PC-9 (cell line): ENCODE measurements at regions of chr17 and their contacts with region 1.

Region 1: DNA sequence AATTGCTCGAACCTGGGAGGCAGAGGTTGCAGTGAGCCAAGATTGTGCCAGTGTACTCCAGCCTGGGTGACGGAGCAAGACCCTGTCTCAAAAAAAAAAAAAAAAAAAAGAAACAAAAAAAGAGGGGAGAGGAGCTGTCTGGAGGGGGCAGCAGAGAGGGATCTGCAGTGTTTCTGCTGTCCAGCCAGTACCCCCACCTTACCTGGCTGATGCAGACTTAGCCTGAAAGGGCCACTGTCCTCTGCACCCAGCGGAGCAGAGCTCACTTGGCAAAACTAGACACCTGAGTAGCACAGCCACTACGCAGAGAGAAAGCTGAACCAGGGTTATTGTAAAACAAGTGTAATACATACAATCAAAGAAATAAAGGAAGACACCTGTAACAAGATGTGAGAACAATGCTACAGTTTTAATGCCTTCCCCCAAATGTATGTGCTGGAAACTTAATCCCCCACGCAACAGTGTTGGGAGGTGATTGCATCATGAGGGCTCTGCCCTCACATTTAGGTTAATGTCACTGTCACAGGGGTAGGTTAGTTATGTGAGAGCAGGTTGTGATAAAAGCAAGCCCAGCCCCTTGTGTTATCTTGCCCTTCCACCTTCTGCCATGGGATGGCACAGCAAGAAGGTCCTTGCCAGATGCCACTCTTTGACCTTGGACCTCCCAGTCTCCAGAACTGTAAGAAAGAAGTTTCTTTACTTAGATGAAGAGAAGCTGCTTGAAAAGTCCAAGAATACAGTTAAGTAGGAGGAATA is 211.2 kb downstream of the RPTOR start:
- DNase-seq: no peak
- H3K4me3 ChIP-seq: no peak overlapping the region
- H3K27ac ChIP-seq: no peak overlapping the region
- H3K4me1 ChIP-seq: peaks cover 20% of the 10 kb centered on the region
- H3K27me3 ChIP-seq: no peaks in the 10 kb centered on the region
- CTCF ChIP-seq: no peak

Region 2: DNA sequence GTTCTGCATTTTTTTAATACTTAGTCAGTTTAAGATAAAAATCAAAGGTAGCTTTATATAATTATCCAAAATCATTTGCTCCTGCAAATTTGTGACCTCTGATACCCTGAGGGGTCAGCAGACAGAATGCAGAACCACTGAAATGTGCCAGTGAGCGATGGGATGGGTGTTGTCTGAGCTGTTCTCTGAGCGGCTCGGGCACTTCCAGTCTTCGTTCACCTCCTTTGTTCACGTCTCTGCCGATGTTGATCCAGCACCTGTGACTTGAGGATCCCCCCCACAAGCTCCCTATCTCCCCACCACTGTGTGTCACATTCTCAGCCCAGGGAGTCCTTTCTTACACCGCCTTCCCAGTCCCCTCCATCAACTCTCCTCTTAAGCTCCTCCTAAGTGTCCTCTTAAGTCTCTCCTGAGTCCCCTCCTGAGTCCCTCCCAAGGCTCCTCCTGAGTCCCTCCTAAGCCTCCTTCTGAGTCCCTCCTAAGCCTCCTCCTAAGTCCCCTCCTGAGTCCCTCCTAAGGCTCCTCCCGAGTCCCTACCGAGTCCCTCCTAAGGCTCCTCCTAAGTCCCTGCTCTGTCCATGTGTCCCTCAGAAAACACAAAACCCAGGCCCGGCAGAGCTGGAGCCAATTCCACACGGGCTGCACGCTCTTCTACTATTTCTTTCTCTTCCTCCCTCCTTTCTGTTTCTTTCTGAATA is 447.7 kb before region 1 on chr17:
- CTCF ChIA-PET with region 1: no interaction called
- POLR2A ChIA-PET with region 1: no interaction called
- intact Hi-C with region 1: no loop called
- DNase-seq: no peak
- H3K4me3 ChIP-seq: no peak overlapping the region
- H3K27ac ChIP-seq: no peak overlapping the region
- H3K4me1 ChIP-seq: no peaks in the 10 kb centered on the region
- H3K27me3 ChIP-seq: no peaks in the 10 kb centered on the region
- CTCF ChIP-seq: no peak

Region 3: GRCh38 chr17:80720610-80721577 is 34.9 kb before region 1 on chr17:
- CTCF ChIA-PET with region 1: interaction called, 17 read pairs
- POLR2A ChIA-PET with region 1: no interaction called
- intact Hi-C with region 1: no loop called
- DNase-seq: peak; percentile 31 to 91
- H3K4me3 ChIP-seq: no peak overlapping the region
- H3K27ac ChIP-seq: peak overlapping the region; percentile 81
- H3K4me1 ChIP-seq: peaks cover 25% of the 10 kb centered on the region
- H3K27me3 ChIP-seq: no peaks in the 10 kb centered on the region
- CTCF ChIP-seq: no peak

Region 4: GRCh38 chr17:81002409-81003361 is 246.9 kb after region 1 on chr17:
- CTCF ChIA-PET with region 1: no interaction called
- POLR2A ChIA-PET with region 1: no interaction called
- intact Hi-C with region 1: no loop called
- DNase-seq: peak in 1 of 2 experiments; percentile 45
- H3K4me3 ChIP-seq: no peak overlapping the region
- H3K27ac ChIP-seq: no peak overlapping the region
- H3K4me1 ChIP-seq: no peaks in the 10 kb centered on the region
- H3K27me3 ChIP-seq: no peaks in the 10 kb centered on the region
- CTCF ChIP-seq: no peak